CD14-positive monocyte (primary cell): ENCODE measurements at regions of chr2 and their contacts with region 1.

Region 1: DNA sequence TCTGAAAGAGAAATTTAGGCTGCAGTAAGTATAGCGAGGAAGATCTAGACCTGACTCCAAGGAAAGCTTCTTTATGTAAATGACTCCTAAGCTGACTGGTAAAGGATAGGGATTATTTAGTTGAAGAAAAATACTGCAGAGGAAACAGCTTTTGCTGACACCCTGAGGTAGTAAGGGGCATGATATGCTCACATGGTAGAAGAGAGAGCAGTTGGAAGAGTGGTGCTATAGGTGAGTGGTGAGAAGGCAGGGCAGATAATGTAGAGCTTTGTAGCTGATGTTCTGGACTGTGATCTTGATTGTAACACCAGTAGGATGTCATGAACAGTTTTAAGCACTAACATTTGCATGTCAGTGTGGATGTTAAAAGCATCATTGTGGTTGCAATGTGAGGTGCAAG is 639.1 kb upstream of the SLC39A10 start:
- DNase-seq: no peak
- H3K4me3 ChIP-seq: no peak overlapping the region
- H3K4me3 Mint-ChIP-seq: no peak overlapping the region
- H3K27ac ChIP-seq: no peak overlapping the region
- H3K27ac Mint-ChIP-seq: no peak overlapping the region
- H3K4me1 ChIP-seq: no peaks in the 10 kb centered on the region
- H3K4me1 Mint-ChIP-seq: no peaks in the 10 kb centered on the region
- H3K27me3 ChIP-seq: no peaks in the 10 kb centered on the region
- H3K27me3 Mint-ChIP-seq: peaks cover 0 to 2% (median 0%) of the 10 kb centered on the region in 3 donors
- CTCF ChIP-seq: no peak

Region 2: GRCh38 chr2:194962254-194962949 is 55.5 kb before region 1 on chr2:
- intact Hi-C with region 1: no loop called
- DNase-seq: no peak
- H3K4me3 ChIP-seq: no peak overlapping the region
- H3K4me3 Mint-ChIP-seq: no peak overlapping the region
- H3K27ac ChIP-seq: no peak overlapping the region
- H3K27ac Mint-ChIP-seq: no peak overlapping the region
- H3K4me1 ChIP-seq: no peaks in the 10 kb centered on the region
- H3K4me1 Mint-ChIP-seq: no peaks in the 10 kb centered on the region
- H3K27me3 ChIP-seq: no peaks in the 10 kb centered on the region
- H3K27me3 Mint-ChIP-seq: no peaks in the 10 kb centered on the region
- CTCF ChIP-seq: no peak

Region 3: GRCh38 chr2:194985258-194985657 is 32.6 kb before region 1 on chr2:
- intact Hi-C with region 1: loop called in 1 of 2 experiments (anchors 2 kb)
- DNase-seq: no peak
- H3K4me3 ChIP-seq: no peak overlapping the region
- H3K4me3 Mint-ChIP-seq: no peak overlapping the region
- H3K27ac ChIP-seq: no peak overlapping the region
- H3K27ac Mint-ChIP-seq: no peak overlapping the region
- H3K4me1 ChIP-seq: no peaks in the 10 kb centered on the region
- H3K4me1 Mint-ChIP-seq: no peaks in the 10 kb centered on the region
- H3K27me3 ChIP-seq: no peaks in the 10 kb centered on the region
- H3K27me3 Mint-ChIP-seq: peaks cover 0 to 2% (median 0%) of the 10 kb centered on the region in 3 donors
- CTCF ChIP-seq: no peak

Region 4: GRCh38 chr2:195368249-195369217 is 350.6 kb after region 1 on chr2:
- intact Hi-C with region 1: no loop called
- DNase-seq: no peak
- H3K4me3 ChIP-seq: no peak overlapping the region
- H3K4me3 Mint-ChIP-seq: no peak overlapping the region
- H3K27ac ChIP-seq: no peak overlapping the region
- H3K27ac Mint-ChIP-seq: no peak overlapping the region
- H3K4me1 ChIP-seq: no peaks in the 10 kb centered on the region
- H3K4me1 Mint-ChIP-seq: no peaks in the 10 kb centered on the region
- H3K27me3 ChIP-seq: no peaks in the 10 kb centered on the region
- H3K27me3 Mint-ChIP-seq: no peaks in the 10 kb centered on the region
- CTCF ChIP-seq: no peak